Esophagus muscularis mucosa (tissue), 4 donors: ENCODE measurements at regions of chr10 and their contacts with region 1.

Region 1: DNA sequence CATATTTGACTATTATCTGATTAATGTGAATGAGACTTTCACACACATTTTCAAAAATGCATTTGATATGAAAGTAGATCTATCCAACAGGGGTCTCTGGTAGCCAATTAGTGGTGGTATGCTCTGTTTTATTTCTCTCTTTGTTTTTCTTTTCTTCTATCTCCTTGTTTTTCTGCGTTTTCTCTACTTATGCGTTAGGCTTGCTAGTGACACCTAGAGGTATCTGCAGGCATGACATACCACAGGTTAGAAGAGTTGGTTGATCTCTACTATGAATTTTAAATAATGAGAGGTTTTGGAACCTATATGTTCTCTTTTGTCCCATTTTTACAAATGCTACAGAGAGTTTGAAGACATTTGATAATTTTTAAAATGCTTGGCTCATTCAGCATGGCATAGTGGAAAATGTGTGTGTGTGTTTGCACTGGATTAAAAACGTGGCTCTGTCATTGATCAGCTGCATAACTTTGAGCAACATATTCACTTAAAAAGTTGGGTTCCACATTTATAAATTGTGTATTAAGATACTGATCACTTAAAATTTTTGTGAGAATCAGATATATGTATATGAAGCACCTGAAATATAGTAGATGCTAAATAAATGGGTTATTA is 28.1 kb upstream of the PLXDC2 start:
- DNase-seq: no peak
- H3K4me3 ChIP-seq: no peak overlapping the region
- H3K27ac ChIP-seq: no peak overlapping the region
- H3K4me1 ChIP-seq: no peaks in the 10 kb centered on the region
- H3K27me3 ChIP-seq: no peaks in the 10 kb centered on the region
- CTCF ChIP-seq: peak; percentile 65 to 91 (median 75)
- EP300 ChIP-seq: no peak
- POLR2A ChIP-seq: no peak

Region 2: GRCh38 chr10:19412531-19412930 is 375.6 kb before region 1 on chr10:
- intact Hi-C with region 1: loop called (anchors 2 kb)
- DNase-seq: no peak
- H3K4me3 ChIP-seq: no peak overlapping the region
- H3K27ac ChIP-seq: no peak overlapping the region
- H3K4me1 ChIP-seq: no peaks in the 10 kb centered on the region
- H3K27me3 ChIP-seq: no peaks in the 10 kb centered on the region
- CTCF ChIP-seq: peak; percentile 53 to 64 (median 64)
- EP300 ChIP-seq: no peak
- POLR2A ChIP-seq: no peak

Region 3: GRCh38 chr10:19488592-19489280 is 299.4 kb before region 1 on chr10:
- intact Hi-C with region 1: loop called (anchors 10 kb)
- DNase-seq: no peak
- H3K4me3 ChIP-seq: peak overlapping the region; percentile 34 to 45 (median 44)
- H3K27ac ChIP-seq: peak overlapping the region in 2 of 4 donors; percentile 12 to 42
- H3K4me1 ChIP-seq: peaks cover 0 to 23% (median 15%) of the 10 kb centered on the region in 4 donors
- H3K27me3 ChIP-seq: no peaks in the 10 kb centered on the region
- CTCF ChIP-seq: peak in 2 of 3 experiments; percentile 8 to 15
- EP300 ChIP-seq: no peak
- POLR2A ChIP-seq: no peak